Heart right ventricle (tissue), 16 donors: ENCODE measurements at regions of chr2 and their contacts with region 1.

Region 1: DNA sequence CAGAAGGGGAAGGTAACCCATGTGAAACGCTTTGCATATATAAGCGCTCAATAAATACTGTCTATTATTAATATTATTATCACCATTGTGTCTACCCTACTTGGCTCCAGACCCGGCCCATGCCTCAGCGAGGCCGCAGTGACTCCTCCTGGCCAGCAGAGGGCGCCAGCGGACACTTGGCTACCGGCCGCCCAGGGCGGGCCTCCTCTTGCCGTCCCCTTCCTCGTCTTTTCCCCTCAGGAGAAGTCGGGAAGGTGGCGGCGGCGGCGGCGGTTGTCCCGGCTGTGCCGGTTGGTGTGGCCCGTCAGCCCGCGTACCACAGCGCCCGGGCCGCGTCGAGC is at the start of gene AGFG1:
- DNase-seq: peak; percentile 82 to 87
- ATAC-seq: peak; percentile 81 to 96 (median 92)
- H3K4me3 ChIP-seq: peak within 1 kb of the TSS; percentile 82 to 99 (median 92)
- H3K27ac ChIP-seq: peak within 1 kb of the TSS; percentile 41 to 96 (median 86)
- H3K4me1 ChIP-seq: peaks cover 9 to 43% (median 29%) of the 10 kb centered on the region in 9 donors
- H3K27me3 ChIP-seq: no peaks in the 10 kb centered on the region
- CTCF ChIP-seq: peak; percentile 99 to 100 (median 99)
- total RNA-seq, gene AGFG1: 52.8 to 77.9 (median 59.0) TPM

Region 2: GRCh38 chr2:227406177-227407031 is 65.5 kb before region 1 on chr2:
- intact Hi-C with region 1: loop called in 6 of 10 experiments (anchors 5 to 10 kb)
- DNase-seq: peak; percentile 20 to 73
- ATAC-seq: peak; percentile 86 to 94 (median 90)
- H3K4me3 ChIP-seq: no peak overlapping the region
- H3K27ac ChIP-seq: peak overlapping the region; percentile 29 to 84 (median 66)
- H3K4me1 ChIP-seq: peaks cover 4 to 48% (median 14%) of the 10 kb centered on the region in 9 donors
- H3K27me3 ChIP-seq: no peaks in the 10 kb centered on the region
- CTCF ChIP-seq: peak; percentile 31 to 85 (median 73)

Region 3: GRCh38 chr2:227415538-227416424 is 56.1 kb before region 1 on chr2:
- intact Hi-C with region 1: loop called in 2 of 10 experiments (anchors 5 kb)
- DNase-seq: peak; percentile 20 to 36
- ATAC-seq: peak; percentile 73 to 92 (median 81)
- H3K4me3 ChIP-seq: no peak overlapping the region
- H3K27ac ChIP-seq: peak overlapping the region in 8 of 10 donors; percentile 6 to 90 (median 51)
- H3K4me1 ChIP-seq: peaks cover 0 to 64% (median 0%) of the 10 kb centered on the region in 9 donors
- H3K27me3 ChIP-seq: no peaks in the 10 kb centered on the region
- CTCF ChIP-seq: no peak

Region 4: DNA sequence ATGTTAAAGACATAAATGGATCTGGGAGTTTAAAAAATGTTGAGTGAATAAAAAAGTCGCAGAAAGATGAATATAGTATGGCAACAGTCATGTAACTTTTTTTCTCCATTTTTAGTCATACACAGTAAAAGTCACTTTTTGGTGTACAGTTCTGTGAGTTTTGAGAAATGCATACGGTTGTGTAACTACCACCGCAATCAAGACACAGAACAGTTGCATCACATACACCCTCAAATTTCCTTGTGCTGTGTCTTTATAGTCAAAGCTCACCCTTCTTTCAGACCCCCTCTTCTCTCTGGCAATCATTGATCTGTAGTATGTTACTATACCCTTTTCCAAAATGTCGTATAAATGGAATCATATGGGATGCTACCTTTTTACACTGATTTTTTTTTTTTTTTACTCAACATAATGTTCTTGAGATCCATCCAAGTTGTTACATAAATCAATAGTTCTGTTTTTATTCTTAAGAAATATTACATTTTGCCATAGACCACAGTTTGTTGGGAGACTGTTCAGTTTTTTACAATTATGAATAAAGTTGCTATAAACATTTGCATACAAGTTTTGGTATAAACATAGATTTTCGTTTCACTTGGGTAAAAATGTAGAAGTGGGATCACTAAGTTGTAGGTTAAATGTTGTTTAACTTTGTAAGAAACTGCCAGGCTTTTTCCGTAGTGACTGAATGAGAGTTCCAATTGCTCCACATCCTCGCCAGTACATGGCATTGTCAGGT is 35.3 kb before region 1 on chr2:
- intact Hi-C with region 1: no loop called
- DNase-seq: no peak
- ATAC-seq: peak in 1 of 8 donors; percentile 45
- H3K4me3 ChIP-seq: no peak overlapping the region
- H3K27ac ChIP-seq: peak overlapping the region in 1 of 10 donors; percentile 74
- H3K4me1 ChIP-seq: peaks cover 0 to 8% (median 0%) of the 10 kb centered on the region in 9 donors
- H3K27me3 ChIP-seq: no peaks in the 10 kb centered on the region
- CTCF ChIP-seq: no peak

Region 5: GRCh38 chr2:227509824-227510619 is 38.1 kb after region 1 on chr2:
- intact Hi-C with region 1: loop called in 3 of 10 experiments (anchors 5 kb)
- DNase-seq: no peak
- ATAC-seq: no peak
- H3K4me3 ChIP-seq: no peak overlapping the region
- H3K27ac ChIP-seq: no peak overlapping the region
- H3K4me1 ChIP-seq: peaks cover 9 to 97% (median 79%) of the 10 kb centered on the region in 9 donors
- H3K27me3 ChIP-seq: no peaks in the 10 kb centered on the region
- CTCF ChIP-seq: no peak

Region 6: DNA sequence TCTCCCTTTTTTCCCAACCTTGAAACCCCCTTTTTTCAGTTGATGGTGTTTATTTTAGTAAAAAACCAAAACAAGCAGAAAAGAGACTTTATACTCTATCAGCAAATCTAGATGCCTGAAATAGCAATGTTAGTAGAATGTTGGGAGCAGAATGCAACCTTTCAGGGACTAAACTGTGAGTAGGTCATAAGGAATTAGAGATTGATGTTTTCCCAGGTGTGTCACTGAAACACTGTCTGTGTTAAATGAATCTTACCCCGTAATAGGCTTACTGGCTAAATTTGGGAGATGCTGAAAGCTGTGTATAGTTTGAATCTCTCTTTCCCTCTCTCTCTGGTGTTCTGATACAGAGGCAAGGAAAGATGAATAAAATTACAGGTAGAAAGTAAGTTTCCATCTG is 43.8 kb after region 1 on chr2:
- intact Hi-C with region 1: loop called in 3 of 10 experiments (anchors 5 kb)
- DNase-seq: no peak
- ATAC-seq: no peak
- H3K4me3 ChIP-seq: no peak overlapping the region
- H3K27ac ChIP-seq: peak overlapping the region in 1 of 10 donors; percentile 32
- H3K4me1 ChIP-seq: peaks cover 6 to 95% (median 75%) of the 10 kb centered on the region in 9 donors
- H3K27me3 ChIP-seq: no peaks in the 10 kb centered on the region
- CTCF ChIP-seq: no peak

Region 7: GRCh38 chr2:227655454-227655853 is 183.6 kb after region 1 on chr2:
- intact Hi-C with region 1: loop called in 2 of 10 experiments (anchors 10 kb)
- DNase-seq: no peak
- ATAC-seq: peak in 4 of 8 donors; percentile 24 to 93 (median 65)
- H3K4me3 ChIP-seq: no peak overlapping the region
- H3K27ac ChIP-seq: peak overlapping the region in 1 of 10 donors; percentile 71
- H3K4me1 ChIP-seq: peaks cover 0 to 27% (median 0%) of the 10 kb centered on the region in 9 donors
- H3K27me3 ChIP-seq: peaks cover 0 to 4% (median 0%) of the 10 kb centered on the region in 7 donors
- CTCF ChIP-seq: no peak